Gastrocnemius medialis (tissue), 4 donors: ENCODE measurements at regions of chr1 and their contacts with region 1.

Region 1: DNA sequence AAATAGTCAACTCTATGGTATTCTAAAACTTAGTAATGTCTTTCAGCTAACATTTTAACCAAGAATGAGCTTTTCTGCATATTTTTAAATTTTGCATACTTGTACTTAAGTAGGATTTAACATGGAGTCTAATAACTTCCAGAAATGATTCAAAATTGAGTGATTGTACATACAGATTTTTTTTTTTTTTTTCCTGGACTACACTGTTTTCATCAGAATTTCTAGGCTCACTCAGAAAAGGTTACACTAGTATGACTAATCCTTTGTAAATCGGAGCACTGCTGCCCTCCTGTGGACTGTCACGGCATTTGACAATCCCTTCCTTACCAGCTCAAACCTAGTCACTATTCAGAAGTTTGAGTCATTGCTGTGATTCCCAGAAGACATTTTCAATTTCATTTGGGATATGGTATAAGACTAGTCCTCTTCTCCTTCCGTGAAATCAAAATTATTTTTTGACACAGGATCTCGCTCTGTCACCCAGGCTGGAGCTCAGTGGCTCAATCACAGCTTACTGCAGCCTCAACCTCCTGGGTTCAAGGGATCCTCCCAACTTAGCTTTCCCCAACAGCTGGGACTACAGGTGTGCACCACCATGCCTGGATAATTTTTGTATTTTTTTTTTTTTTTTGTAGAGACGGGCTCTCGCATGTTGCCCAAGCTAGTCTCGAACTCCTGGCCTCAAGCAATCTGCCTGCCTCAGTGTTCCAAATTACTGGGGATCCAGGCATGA is 45.5 kb downstream of the CD46 start:
- DNase-seq: peak; percentile 67 to 87
- ATAC-seq: peak; percentile 68 to 73
- H3K4me3 ChIP-seq: no peak overlapping the region
- H3K27ac ChIP-seq: peak overlapping the region; percentile 72 to 100 (median 86)
- H3K4me1 ChIP-seq: peaks cover 3 to 34% of the 10 kb centered on the region in 2 donors
- H3K27me3 ChIP-seq: no peaks in the 10 kb centered on the region
- CTCF ChIP-seq: peak; percentile 76 to 85 (median 81)
- POLR2A ChIP-seq: no peak

Region 2: DNA sequence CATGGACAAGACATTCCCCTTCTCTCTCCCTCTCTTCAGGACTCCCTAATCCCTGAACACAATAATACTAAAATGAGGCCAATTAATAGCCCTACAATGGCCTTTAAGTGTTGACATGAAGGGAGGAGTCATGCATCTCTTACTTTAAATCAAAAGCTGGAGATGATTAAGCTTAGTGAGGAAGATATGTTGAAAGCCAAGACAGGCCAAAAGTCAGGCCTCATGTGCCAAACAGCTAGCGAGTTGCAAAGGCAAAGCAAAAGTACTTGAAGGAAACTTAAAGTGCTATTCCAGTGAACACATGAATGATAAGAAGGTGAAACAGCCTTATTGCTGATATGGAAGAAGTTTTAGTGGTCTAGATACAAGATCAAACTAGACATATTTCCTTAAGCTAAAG is 95.1 kb before region 1 on chr1:
- in situ Hi-C with region 1: no loop called
- intact Hi-C with region 1: loop called (anchors 10 kb)
- DNase-seq: no peak
- ATAC-seq: no peak
- H3K4me3 ChIP-seq: no peak overlapping the region
- H3K27ac ChIP-seq: no peak overlapping the region
- H3K4me1 ChIP-seq: no peaks in the 10 kb centered on the region
- H3K27me3 ChIP-seq: no peaks in the 10 kb centered on the region
- CTCF ChIP-seq: no peak
- POLR2A ChIP-seq: no peak

Region 3: GRCh38 chr1:207751790-207752455 is 45.5 kb before region 1 on chr1 and contains the start of gene CD46:
- in situ Hi-C with region 1: no loop called
- intact Hi-C with region 1: loop called (anchors 2 kb)
- DNase-seq: peak; percentile 95 to 96
- ATAC-seq: peak; percentile 90 to 91
- H3K4me3 ChIP-seq: peak within 1 kb of the TSS; percentile 83 to 98 (median 91)
- H3K27ac ChIP-seq: peak within 1 kb of the TSS; percentile 90 to 97 (median 92)
- H3K4me1 ChIP-seq: peaks cover 47 to 48% of the 10 kb centered on the region in 2 donors
- H3K27me3 ChIP-seq: no peaks in the 10 kb centered on the region
- CTCF ChIP-seq: peak in 3 of 5 experiments; percentile 10 to 25 (median 13)
- POLR2A ChIP-seq: peak; percentile 80 to 91
- total RNA-seq, gene CD46: 42.1 to 101 (median 80.2) TPM